Heart right ventricle (tissue), 16 donors: ENCODE measurements at regions of chr22 and their contacts with region 1.

Region 1: DNA sequence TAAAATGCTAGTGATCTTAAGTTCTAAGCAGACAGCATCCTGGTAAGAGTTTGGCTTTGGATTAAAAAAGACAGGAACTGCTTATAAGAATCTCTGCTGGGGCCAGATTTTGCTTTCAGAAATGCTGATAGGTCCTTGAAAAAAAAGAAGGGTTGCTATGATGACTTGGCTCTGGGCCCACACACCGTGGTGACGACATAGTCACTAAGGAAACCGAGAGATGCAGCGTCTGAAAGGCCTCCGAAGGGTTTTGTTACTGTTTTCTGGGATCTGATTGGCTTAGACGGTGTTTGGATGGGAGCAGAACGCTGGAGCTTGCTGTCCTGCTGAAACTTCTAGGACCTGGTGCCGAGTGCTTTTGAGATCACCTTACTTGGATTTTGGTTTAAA is 8.4 kb downstream of the FAM118A start:
- DNase-seq: peak; percentile 74 to 89
- ATAC-seq: peak in 7 of 8 donors; percentile 49 to 87 (median 75)
- H3K4me3 ChIP-seq: peak overlapping the region in 5 of 10 donors; percentile 11 to 29 (median 14)
- H3K27ac ChIP-seq: peak overlapping the region; percentile 4 to 91 (median 79)
- H3K4me1 ChIP-seq: peaks cover 3 to 71% (median 50%) of the 10 kb centered on the region in 9 donors
- H3K27me3 ChIP-seq: no peaks in the 10 kb centered on the region
- CTCF ChIP-seq: no peak

Region 2: GRCh38 chr22:45424231-45424731 is 106.1 kb after region 1 on chr22:
- intact Hi-C with region 1: loop called in 1 of 10 experiments (anchors 5 kb)
- DNase-seq: no peak
- ATAC-seq: peak in 5 of 8 donors; percentile 30 to 68 (median 57)
- H3K4me3 ChIP-seq: no peak overlapping the region
- H3K27ac ChIP-seq: peak overlapping the region in 1 of 10 donors; percentile 65
- H3K4me1 ChIP-seq: peaks cover 0 to 16% (median 0%) of the 10 kb centered on the region in 9 donors
- H3K27me3 ChIP-seq: peaks cover 0 to 4% (median 0%) of the 10 kb centered on the region in 7 donors
- CTCF ChIP-seq: no peak